GM12878 (cell line): ENCODE measurements at regions of chr9 and their contacts with region 1.

Region 1: DNA sequence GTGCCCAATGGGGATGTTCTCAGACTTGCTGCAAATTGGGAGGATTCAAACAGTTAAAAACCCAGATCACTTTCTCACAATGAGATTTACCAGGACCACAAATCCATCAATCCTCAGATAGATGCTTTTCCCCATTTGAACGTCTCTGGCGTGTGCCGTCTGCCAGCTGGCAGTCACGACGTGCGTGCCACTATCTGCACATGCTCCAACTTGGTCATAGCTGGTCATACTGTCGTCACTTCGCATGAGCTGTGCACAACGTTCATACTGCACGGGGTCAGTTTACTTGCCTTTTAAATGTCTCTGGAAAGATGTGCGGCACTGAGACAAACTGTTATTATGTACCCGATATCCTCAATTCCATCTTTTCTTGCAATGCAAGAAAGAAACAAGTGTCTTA is 118.3 kb upstream of the RAPGEF1 start:
- DNase-seq: no peak
- ATAC-seq: no peak
- H3K4me3 ChIP-seq: no peak overlapping the region
- H3K27ac ChIP-seq: no peak overlapping the region
- H3K4me1 ChIP-seq: no peaks in the 10 kb centered on the region
- H3K27me3 ChIP-seq: no peaks in the 10 kb centered on the region
- CTCF ChIP-seq: no peak
- EP300 ChIP-seq: no peak
- POLR2A ChIP-seq: no peak
- RAD21 ChIP-seq: no peak

Region 2: GRCh38 chr9:131875828-131876485 is 17.8 kb after region 1 on chr9:
- CTCF ChIA-PET with region 1: no interaction called
- POLR2A ChIA-PET with region 1: no interaction called
- RAD21 ChIA-PET with region 1: no interaction called
- SMC1A ChIA-PET with region 1: no interaction called
- in situ Hi-C with region 1: no loop called
- intact Hi-C with region 1: no loop called
- DNase-seq: no peak
- ATAC-seq: no peak
- H3K4me3 ChIP-seq: no peak overlapping the region
- H3K27ac ChIP-seq: no peak overlapping the region
- H3K4me1 ChIP-seq: no peaks in the 10 kb centered on the region
- H3K27me3 ChIP-seq: no peaks in the 10 kb centered on the region
- CTCF ChIP-seq: no peak
- EP300 ChIP-seq: no peak
- POLR2A ChIP-seq: no peak
- RAD21 ChIP-seq: no peak

Region 3: DNA sequence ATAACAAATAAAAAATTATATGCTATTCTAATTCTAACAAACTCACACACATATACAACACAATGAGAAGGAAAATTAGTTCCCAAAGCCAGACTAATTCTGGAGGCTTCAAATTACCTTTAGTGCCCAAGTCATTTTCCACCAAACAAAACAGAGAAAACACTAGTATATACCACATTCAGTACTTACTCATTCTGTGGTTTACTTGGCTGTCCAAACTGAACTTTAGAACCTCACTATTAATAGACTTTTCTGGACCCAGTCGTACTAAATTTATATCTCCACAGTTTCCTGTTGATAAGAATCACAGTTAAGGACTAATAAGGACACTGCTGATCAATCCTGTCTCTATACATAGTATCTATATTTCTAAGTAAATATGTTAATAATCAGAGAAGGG is 430.2 kb after region 1 on chr9:
- CTCF ChIA-PET with region 1: no interaction called
- POLR2A ChIA-PET with region 1: interaction called, 10 read pairs
- RAD21 ChIA-PET with region 1: no interaction called
- SMC1A ChIA-PET with region 1: no interaction called
- in situ Hi-C with region 1: no loop called
- intact Hi-C with region 1: no loop called
- DNase-seq: no peak
- ATAC-seq: no peak
- H3K4me3 ChIP-seq: no peak overlapping the region
- H3K27ac ChIP-seq: no peak overlapping the region
- H3K4me1 ChIP-seq: no peaks in the 10 kb centered on the region
- H3K27me3 ChIP-seq: no peaks in the 10 kb centered on the region
- CTCF ChIP-seq: no peak
- EP300 ChIP-seq: no peak
- POLR2A ChIP-seq: no peak
- RAD21 ChIP-seq: no peak